ENCODE measurements at regions of chr4 and their contacts with region 1.

Region 1: GRCh38 chr4:186201535-186202230 is 10.3 kb downstream of the CYP4V2 start:
- DNase-seq: peak in 8 of 9 donors; percentile 12 to 70 (median 50)
- ATAC-seq: peak; percentile 98
- H3K4me3 ChIP-seq: no peak overlapping the region
- H3K4me3 Mint-ChIP-seq: peak overlapping the region in 7 of 10 donors; percentile 0 to 55 (median 35)
- H3K27ac ChIP-seq: peak overlapping the region; percentile 48
- H3K27ac Mint-ChIP-seq: peak overlapping the region in 8 of 9 donors; percentile 14 to 97 (median 56)
- H3K4me1 ChIP-seq: no peaks in the 10 kb centered on the region
- H3K4me1 Mint-ChIP-seq: peaks cover 8 to 51% (median 20%) of the 10 kb centered on the region in 7 donors
- H3K27me3 ChIP-seq: no peaks in the 10 kb centered on the region
- H3K27me3 Mint-ChIP-seq: no peaks in the 10 kb centered on the region

Region 2: DNA sequence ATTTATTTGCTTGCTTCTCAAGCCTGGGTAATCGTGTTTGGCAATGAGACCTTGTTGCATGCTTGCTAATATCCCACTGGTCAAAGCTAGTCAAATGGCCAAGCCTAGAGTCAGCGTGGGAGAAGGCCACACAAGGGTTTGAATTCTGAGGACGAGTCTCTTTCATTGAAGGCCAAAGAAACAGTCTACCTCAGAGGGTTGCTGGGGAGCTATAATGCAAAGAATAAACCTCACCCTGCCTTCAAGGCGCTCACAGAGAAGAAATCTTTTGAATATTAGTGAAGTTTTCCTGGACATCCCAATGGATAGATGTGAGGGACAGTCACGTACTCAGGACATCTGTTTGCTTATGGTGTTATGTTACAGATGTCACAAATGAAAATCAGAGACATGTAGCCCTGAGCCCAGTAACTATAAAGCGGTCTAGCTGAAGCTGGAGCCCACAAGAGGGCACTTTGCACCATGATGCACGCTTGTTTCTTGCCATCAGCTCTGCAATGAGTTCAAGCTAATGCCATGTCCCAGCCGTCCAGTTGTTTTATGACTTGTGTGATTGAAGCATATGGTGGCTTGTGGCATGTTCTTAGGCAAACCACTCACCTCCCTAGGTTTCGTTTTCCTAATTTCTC is 133.8 kb before region 1 on chr4:
- CTCF ChIA-PET with region 1: interaction called, 8 read pairs
- POLR2A ChIA-PET with region 1: interaction called, 4 read pairs
- intact Hi-C with region 1: loop called in 1 of 2 experiments (anchors 1 kb)
- DNase-seq: peak in 5 of 9 donors; percentile 14 to 41 (median 16)
- ATAC-seq: peak; percentile 77
- H3K4me3 ChIP-seq: peak overlapping the region; percentile 63
- H3K4me3 Mint-ChIP-seq: peak overlapping the region; percentile 31 to 88 (median 79)
- H3K27ac ChIP-seq: no peak overlapping the region
- H3K27ac Mint-ChIP-seq: peak overlapping the region in 2 of 9 donors; percentile 49 to 80
- H3K4me1 ChIP-seq: peaks cover 0 to 3% of the 10 kb centered on the region in 2 donors
- H3K4me1 Mint-ChIP-seq: peaks cover 0 to 28% (median 25%) of the 10 kb centered on the region in 7 donors
- H3K27me3 ChIP-seq: no peaks in the 10 kb centered on the region
- H3K27me3 Mint-ChIP-seq: peaks cover 0 to 18% (median 14%) of the 10 kb centered on the region in 5 donors

Region 3: GRCh38 chr4:186149872-186150271 is 51.8 kb before region 1 on chr4:
- CTCF ChIA-PET with region 1: interaction called, 4 read pairs
- POLR2A ChIA-PET with region 1: no interaction called
- intact Hi-C with region 1: loop called in 1 of 2 experiments (anchors 1 kb)
- DNase-seq: peak in 3 of 9 donors; percentile 17 to 38 (median 29)
- ATAC-seq: no peak
- H3K4me3 ChIP-seq: no peak overlapping the region
- H3K4me3 Mint-ChIP-seq: no peak overlapping the region
- H3K27ac ChIP-seq: no peak overlapping the region
- H3K27ac Mint-ChIP-seq: peak overlapping the region in 1 of 9 donors; percentile 22
- H3K4me1 ChIP-seq: no peaks in the 10 kb centered on the region
- H3K4me1 Mint-ChIP-seq: peaks cover 0 to 10% (median 6%) of the 10 kb centered on the region in 7 donors
- H3K27me3 ChIP-seq: peaks cover 0 to 11% of the 10 kb centered on the region in 2 donors
- H3K27me3 Mint-ChIP-seq: peaks cover 42 to 56% (median 46%) of the 10 kb centered on the region in 5 donors

Region 4: DNA sequence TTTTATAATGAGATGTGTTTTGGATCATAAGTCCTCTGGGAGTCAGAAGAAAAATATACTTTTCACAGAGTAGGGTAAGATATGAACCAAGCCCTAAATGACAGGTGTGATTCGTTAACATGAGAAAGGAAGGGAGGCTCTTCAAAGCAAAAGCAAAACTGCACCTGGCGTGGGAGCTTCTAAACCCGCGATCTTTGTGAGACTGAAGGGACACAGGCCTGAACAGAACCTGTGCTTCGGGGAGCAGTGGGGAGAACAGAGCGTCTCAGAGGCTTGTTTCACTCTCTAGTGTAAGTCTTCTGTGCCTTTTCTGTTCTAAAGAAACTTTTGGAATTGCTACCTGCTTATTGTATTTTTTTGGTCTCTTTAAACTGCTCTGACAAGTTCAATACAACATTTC is 40.5 kb before region 1 on chr4:
- CTCF ChIA-PET with region 1: interaction called, 5 read pairs
- POLR2A ChIA-PET with region 1: interaction called, 3 read pairs
- intact Hi-C with region 1: loop called in 1 of 2 experiments (anchors 1 kb)
- DNase-seq: peak in 6 of 9 donors; percentile 16 to 31 (median 20)
- ATAC-seq: peak; percentile 79
- H3K4me3 ChIP-seq: no peak overlapping the region
- H3K4me3 Mint-ChIP-seq: peak overlapping the region; percentile 5 to 81 (median 70)
- H3K27ac ChIP-seq: no peak overlapping the region
- H3K27ac Mint-ChIP-seq: peak overlapping the region in 6 of 9 donors; percentile 29 to 90 (median 71)
- H3K4me1 ChIP-seq: no peaks in the 10 kb centered on the region
- H3K4me1 Mint-ChIP-seq: peaks cover 0 to 8% (median 5%) of the 10 kb centered on the region in 7 donors
- H3K27me3 ChIP-seq: no peaks in the 10 kb centered on the region
- H3K27me3 Mint-ChIP-seq: peaks cover 0 to 6% (median 0%) of the 10 kb centered on the region in 5 donors

Region 5: DNA sequence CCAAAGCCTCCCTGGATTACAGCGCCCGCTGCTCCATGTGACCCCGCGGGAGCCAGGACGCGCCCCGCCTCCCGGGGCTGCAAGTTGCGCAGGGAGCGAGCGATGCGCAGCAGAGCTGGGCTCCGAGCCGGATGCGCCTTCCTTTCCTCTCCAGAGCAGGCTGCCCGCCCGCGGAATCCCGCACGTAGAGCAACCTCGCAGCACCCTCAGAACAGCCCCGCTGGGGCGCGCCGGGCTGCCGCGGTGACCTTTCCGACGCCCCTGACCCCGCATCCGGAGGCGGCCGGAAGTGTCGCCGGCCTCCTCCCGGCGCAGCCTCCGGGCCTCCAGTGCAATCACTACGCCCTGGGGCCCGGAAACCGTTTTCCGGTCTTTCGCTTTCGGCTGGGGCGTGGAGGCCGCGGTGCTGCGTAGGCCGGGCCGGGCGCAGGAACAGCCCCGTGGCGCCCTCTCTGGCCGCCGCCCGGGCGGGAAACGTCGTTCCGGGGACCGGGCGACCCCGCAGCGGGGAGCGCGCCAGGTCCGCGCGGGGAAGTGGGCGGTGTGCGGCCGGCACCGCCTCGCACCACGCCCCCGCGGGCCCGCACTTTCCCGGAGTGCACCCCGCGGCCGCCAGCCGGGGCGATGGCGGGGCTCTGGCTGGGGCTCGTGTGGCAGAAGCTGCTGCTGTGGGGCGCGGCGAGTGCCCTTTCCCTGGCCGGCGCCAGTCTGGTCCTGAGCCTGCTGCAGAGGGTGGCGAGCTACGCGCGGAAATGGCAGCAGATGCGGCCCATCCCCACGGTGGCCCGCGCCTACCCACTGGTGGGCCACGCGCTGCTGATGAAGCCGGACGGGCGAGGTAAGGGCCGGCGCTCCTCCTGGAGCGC is 10.2 kb before region 1 on chr4 and contains the start of gene CYP4V2:
- CTCF ChIA-PET with region 1: interaction called, 11 read pairs
- POLR2A ChIA-PET with region 1: interaction called, 189 read pairs
- intact Hi-C with region 1: loop called in 1 of 2 experiments (anchors 1 kb)
- DNase-seq: peak; percentile 68 to 94 (median 90)
- ATAC-seq: peak; percentile 90
- H3K4me3 ChIP-seq: peak within 1 kb of the TSS; percentile 91
- H3K4me3 Mint-ChIP-seq: peak within 1 kb of the TSS; percentile 89 to 97 (median 94)
- H3K27ac ChIP-seq: peak within 1 kb of the TSS; percentile 95
- H3K27ac Mint-ChIP-seq: peak within 1 kb of the TSS; percentile 94 to 99 (median 98)
- H3K4me1 ChIP-seq: peaks cover 12 to 19% of the 10 kb centered on the region in 2 donors
- H3K4me1 Mint-ChIP-seq: peaks cover 34 to 62% (median 56%) of the 10 kb centered on the region in 7 donors
- H3K27me3 ChIP-seq: no peaks in the 10 kb centered on the region
- H3K27me3 Mint-ChIP-seq: no peaks in the 10 kb centered on the region
- total RNA-seq, gene CYP4V2: 19.7 to 41.4 (median 26.0) TPM

Region 6: GRCh38 chr4:186249785-186250754 is 48.4 kb after region 1 on chr4:
- CTCF ChIA-PET with region 1: no interaction called
- POLR2A ChIA-PET with region 1: no interaction called
- intact Hi-C with region 1: no loop called
- DNase-seq: no peak
- ATAC-seq: no peak
- H3K4me3 ChIP-seq: no peak overlapping the region
- H3K4me3 Mint-ChIP-seq: no peak overlapping the region
- H3K27ac ChIP-seq: no peak overlapping the region
- H3K27ac Mint-ChIP-seq: no peak overlapping the region
- H3K4me1 ChIP-seq: no peaks in the 10 kb centered on the region
- H3K4me1 Mint-ChIP-seq: no peaks in the 10 kb centered on the region
- H3K27me3 ChIP-seq: no peaks in the 10 kb centered on the region
- H3K27me3 Mint-ChIP-seq: no peaks in the 10 kb centered on the region

Measured in naive thymus-derived CD4-positive, alpha-beta T cell (primary cell).